Heart left ventricle (tissue), 16 donors: ENCODE measurements at regions of chrX and their contacts with region 1.

Region 1: DNA sequence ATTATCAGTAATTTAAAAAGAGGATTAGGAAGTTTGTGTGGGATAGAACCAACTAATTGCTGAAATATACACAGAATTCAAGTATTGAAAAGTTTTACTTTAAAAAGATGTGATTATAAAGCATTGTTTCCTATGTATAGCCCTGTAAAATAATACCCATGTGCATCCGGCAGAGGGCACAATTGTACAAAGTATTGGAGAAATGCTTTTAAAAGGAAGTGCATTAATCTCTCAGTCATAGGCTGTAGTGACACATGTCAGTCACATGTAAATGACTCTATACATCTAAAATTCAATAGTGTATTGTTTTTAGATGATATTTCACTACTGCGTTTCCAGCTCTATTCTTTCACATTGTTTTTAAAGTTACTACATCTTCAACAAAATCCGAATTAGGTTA is 9.7 kb upstream of the GEMIN8 start:
- DNase-seq: peak in 3 of 5 donors; percentile 11 to 30 (median 14)
- ATAC-seq: peak in 3 of 4 donors; percentile 47 to 70 (median 59)
- H3K4me3 ChIP-seq: no peak overlapping the region
- H3K27ac ChIP-seq: no peak overlapping the region
- H3K4me1 ChIP-seq: no peaks in the 10 kb centered on the region
- H3K27me3 ChIP-seq: peaks cover 0 to 21% (median 0%) of the 10 kb centered on the region in 9 donors
- CTCF ChIP-seq: peak; percentile 35 to 72 (median 67)
- POLR2A ChIP-seq: no peak

Region 2: DNA sequence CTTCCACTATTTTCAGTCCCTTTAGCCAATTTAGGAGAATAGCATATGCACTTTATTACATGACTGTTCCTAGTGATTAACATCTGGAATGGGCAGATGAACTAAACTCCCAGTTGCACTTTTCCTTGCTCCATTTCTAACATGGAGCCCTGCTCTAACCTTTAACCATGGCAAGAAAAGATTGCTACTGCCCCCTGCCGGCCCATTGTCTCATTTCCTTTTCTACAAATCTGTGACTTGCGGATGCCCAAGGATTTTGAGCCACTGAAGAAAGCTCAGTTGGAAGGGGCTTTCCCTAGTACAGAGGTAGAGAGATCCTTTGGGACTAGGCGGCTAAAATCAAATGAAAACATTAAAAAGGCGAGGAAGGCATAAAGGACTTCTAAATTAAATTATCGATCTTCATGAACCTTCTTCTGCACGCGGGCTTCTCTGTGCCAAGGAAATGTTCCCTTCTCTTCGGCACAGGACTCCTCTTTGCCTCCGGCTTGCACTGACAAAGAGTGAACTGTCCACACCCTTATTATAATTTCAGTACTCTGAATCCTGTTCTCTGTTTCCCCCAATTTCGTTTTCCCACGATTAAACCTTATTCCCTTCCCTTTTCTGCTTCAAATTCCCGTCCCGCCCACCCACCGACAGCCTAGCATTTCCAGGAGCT is 489.4 kb after region 1 on chrX:
- intact Hi-C with region 1: loop called in 1 of 10 experiments (anchors 5 kb)
- DNase-seq: peak; percentile 4 to 37 (median 28)
- ATAC-seq: no peak
- H3K4me3 ChIP-seq: no peak overlapping the region
- H3K27ac ChIP-seq: no peak overlapping the region
- H3K4me1 ChIP-seq: no peaks in the 10 kb centered on the region
- H3K27me3 ChIP-seq: peaks cover 0 to 7% (median 0%) of the 10 kb centered on the region in 9 donors
- CTCF ChIP-seq: peak in 10 of 12 donors; percentile 18 to 42 (median 34)
- POLR2A ChIP-seq: no peak

Region 3: DNA sequence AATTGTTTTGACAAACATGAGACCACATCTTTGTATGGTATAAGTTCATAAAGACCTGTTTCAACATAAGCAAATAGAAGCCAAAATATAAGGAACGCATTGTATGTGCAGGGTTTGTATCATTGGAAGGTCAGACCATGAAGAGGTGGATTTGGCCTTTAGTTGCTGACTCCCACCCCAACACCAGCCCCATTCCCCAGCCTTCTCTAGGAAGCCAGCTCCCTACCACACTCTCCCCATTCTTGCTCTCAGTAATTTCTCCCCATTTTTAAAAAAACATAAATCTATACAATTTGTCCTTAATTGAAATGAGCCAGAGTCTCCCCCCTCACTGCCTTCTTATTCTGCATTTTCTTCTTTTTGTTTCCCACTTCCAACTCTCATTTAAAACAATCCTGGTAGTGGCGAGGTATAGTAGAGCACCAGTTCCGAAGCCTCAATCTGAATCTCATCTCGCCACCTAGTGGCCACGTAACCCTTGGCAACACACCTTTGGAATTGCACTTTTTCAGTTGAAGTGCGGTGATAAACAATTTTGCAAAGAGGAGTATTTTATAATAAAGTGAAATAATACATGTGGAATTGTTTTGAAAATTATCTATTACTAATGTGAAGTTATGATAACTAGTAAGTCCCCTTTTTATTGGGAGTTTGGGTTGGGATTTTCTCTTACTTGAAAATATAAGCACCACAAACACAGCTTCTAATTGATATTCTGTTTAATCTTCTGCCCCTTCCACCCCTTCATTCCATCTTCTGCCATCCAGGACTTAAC is 1103.9 kb after region 1 on chrX:
- intact Hi-C with region 1: loop called in 6 of 10 experiments (anchors 2 to 10 kb)
- DNase-seq: peak in 4 of 5 donors; percentile 8 to 31 (median 24)
- ATAC-seq: peak in 1 of 4 donors; percentile 53
- H3K4me3 ChIP-seq: no peak overlapping the region
- H3K27ac ChIP-seq: no peak overlapping the region
- H3K4me1 ChIP-seq: no peaks in the 10 kb centered on the region
- H3K27me3 ChIP-seq: peaks cover 0 to 26% (median 0%) of the 10 kb centered on the region in 9 donors
- CTCF ChIP-seq: peak; percentile 48 to 71 (median 59)
- POLR2A ChIP-seq: no peak

Region 4: GRCh38 chrX:15235001-15235400 is 1195.7 kb after region 1 on chrX:
- intact Hi-C with region 1: loop called in 7 of 10 experiments (anchors 5 to 10 kb)
- DNase-seq: no peak
- ATAC-seq: no peak
- H3K4me3 ChIP-seq: no peak overlapping the region
- H3K27ac ChIP-seq: no peak overlapping the region
- H3K4me1 ChIP-seq: no peaks in the 10 kb centered on the region
- H3K27me3 ChIP-seq: peaks cover 0 to 9% (median 0%) of the 10 kb centered on the region in 9 donors
- CTCF ChIP-seq: no peak
- POLR2A ChIP-seq: no peak

Region 5: GRCh38 chrX:15242899-15243555 is 1203.7 kb after region 1 on chrX:
- intact Hi-C with region 1: loop called in 7 of 10 experiments (anchors 5 to 10 kb)
- DNase-seq: peak in 1 of 5 donors; percentile 6
- ATAC-seq: no peak
- H3K4me3 ChIP-seq: no peak overlapping the region
- H3K27ac ChIP-seq: no peak overlapping the region
- H3K4me1 ChIP-seq: no peaks in the 10 kb centered on the region
- H3K27me3 ChIP-seq: peaks cover 0 to 13% (median 0%) of the 10 kb centered on the region in 9 donors
- CTCF ChIP-seq: peak; percentile 17 to 64 (median 49)
- POLR2A ChIP-seq: no peak